ENCODE measurements at regions of chr3 and their contacts with region 1.

Region 1: GRCh38 chr3:40024526-40024925 is 215.1 kb downstream of the MYRIP start:
- DNase-seq: no peak
- H3K4me3 ChIP-seq: no peak overlapping the region
- CTCF ChIP-seq: no peak
- POLR2A ChIP-seq: no peak

Region 2: DNA sequence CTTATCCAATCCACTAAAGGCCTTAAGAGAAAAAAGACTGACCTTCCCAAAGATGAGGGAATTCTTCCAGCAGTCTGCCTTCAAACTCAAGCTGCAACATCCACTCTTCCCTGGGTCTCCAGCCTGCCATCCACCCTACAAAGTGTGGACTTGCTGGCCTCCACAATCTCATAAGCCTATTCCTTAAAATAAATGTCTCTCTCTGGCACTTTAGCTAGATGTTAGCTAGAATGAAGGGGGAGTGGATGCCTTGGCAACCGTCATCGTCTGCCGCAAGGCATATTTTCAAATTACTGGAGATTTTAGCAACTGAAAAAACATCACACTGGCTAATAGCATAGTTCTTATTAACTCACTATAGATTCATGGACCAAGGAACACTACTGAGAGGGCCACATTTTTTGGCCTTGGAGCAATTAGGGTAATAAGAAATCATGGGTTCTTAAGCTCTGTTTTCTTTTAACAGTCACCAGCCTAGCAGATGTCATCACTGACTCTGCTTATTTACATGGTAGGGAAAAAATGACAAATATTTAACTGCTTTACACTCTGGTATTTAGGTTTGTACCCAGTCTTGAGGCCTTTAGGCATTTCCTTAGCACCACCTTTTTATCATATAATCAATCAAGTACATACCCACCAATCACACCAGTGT is 30.2 kb after region 1 on chr3:
- intact Hi-C with region 1: loop called (anchors 2 kb)
- DNase-seq: no peak
- H3K4me3 ChIP-seq: no peak overlapping the region
- CTCF ChIP-seq: no peak
- POLR2A ChIP-seq: no peak

Region 3: GRCh38 chr3:40292637-40293349 is 268.3 kb after region 1 on chr3:
- intact Hi-C with region 1: no loop called
- DNase-seq: no peak
- H3K4me3 ChIP-seq: no peak overlapping the region
- CTCF ChIP-seq: no peak
- POLR2A ChIP-seq: no peak